ENCODE measurements at regions of chr12 and their contacts with region 1.

Region 1: GRCh38 chr12:72380441-72380840 is 108.3 kb downstream of the TRHDE start:
- DNase-seq: no peak
- H3K4me3 ChIP-seq: no peak overlapping the region
- H3K27me3 ChIP-seq: no peaks in the 10 kb centered on the region
- CTCF ChIP-seq: no peak

Region 2: GRCh38 chr12:72369423-72369959 is 10.9 kb before region 1 on chr12:
- CTCF ChIA-PET with region 1: no interaction called
- POLR2A ChIA-PET with region 1: interaction called, 12 read pairs
- DNase-seq: no peak
- H3K4me3 ChIP-seq: no peak overlapping the region
- H3K27me3 ChIP-seq: no peaks in the 10 kb centered on the region
- CTCF ChIP-seq: no peak

Measured in BJ (cell line).